ENCODE measurements at regions of chr4 and their contacts with region 1.

Region 1: DNA sequence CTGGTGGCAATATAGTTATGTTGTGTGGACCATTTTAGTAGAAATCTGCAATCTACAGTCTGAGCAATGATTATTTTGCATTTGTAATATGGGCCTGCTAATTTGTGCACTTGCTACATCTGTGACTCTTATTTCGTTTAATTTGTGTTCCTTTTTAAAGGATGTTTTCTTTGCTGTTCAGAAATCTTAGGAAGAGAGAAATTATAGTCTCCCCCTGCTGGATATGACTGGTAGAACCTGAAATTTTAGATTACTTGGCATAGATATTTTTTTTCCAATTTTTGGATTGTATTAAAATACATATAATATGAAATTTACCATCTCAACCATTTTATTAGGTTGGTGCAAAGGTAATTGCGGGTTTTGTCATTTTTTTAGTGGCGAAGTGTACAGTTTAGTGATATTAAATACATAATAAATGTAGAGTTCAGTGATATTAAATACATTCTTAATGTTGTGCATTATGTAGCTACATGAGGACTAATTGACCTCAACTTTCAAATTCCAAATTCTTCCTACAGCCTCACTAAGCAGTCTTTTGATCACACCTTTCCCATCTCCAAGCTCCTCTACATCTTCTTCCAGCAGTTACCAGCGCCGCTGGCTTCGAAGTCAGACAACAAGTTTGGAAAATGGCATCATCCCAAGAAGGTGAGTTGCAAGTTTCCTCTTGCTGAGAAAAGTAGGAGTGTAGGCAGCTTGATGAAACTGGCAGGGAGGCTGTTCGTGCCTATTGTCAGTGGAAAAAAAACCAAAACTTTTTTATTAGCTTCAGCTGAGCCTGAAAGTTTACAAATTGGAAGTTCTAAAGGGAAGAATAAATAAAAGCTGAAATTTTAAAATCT is 82.2 kb downstream of the FNIP2 start:
- DNase-seq: no peak
- H3K4me3 ChIP-seq: no peak overlapping the region
- H3K27ac ChIP-seq: no peak overlapping the region
- H3K4me1 ChIP-seq: peaks cover 0 to 12% (median 8%) of the 10 kb centered on the region in 4 experiments; a peak in 6 of 7 replicates
- H3K27me3 ChIP-seq: no peaks in the 10 kb centered on the region
- CTCF ChIP-seq: peak in 2 of 3 experiments; percentile 33 to 39; a peak in 2 of 4 replicates
- EP300 ChIP-seq: no peak
- POLR2A ChIP-seq: no peak
- RAD21 ChIP-seq: peak; percentile 25 to 41

Region 2: GRCh38 chr4:158704269-158704668 is 146.8 kb before region 1 on chr4:
- CTCF ChIA-PET with region 1: interaction called, 10 read pairs
- POLR2A ChIA-PET with region 1: no interaction called
- DNase-seq: no peak
- H3K4me3 ChIP-seq: no peak overlapping the region
- H3K27ac ChIP-seq: no peak overlapping the region
- H3K4me1 ChIP-seq: no peaks in the 10 kb centered on the region
- H3K27me3 ChIP-seq: no peaks in the 10 kb centered on the region
- CTCF ChIP-seq: no peak
- EP300 ChIP-seq: no peak
- POLR2A ChIP-seq: no peak
- RAD21 ChIP-seq: no peak

Region 3: GRCh38 chr4:158782551-158783360 is 68.3 kb before region 1 on chr4:
- CTCF ChIA-PET with region 1: interaction called, 16 read pairs
- POLR2A ChIA-PET with region 1: interaction called, 5 read pairs
- DNase-seq: no peak
- H3K4me3 ChIP-seq: no peak overlapping the region
- H3K27ac ChIP-seq: no peak overlapping the region
- H3K4me1 ChIP-seq: peaks cover 0 to 1% (median 0%) of the 10 kb centered on the region in 4 experiments; a peak in 2 of 7 replicates
- H3K27me3 ChIP-seq: no peaks in the 10 kb centered on the region
- CTCF ChIP-seq: no peak
- EP300 ChIP-seq: no peak
- POLR2A ChIP-seq: no peak
- RAD21 ChIP-seq: no peak

Region 4: DNA sequence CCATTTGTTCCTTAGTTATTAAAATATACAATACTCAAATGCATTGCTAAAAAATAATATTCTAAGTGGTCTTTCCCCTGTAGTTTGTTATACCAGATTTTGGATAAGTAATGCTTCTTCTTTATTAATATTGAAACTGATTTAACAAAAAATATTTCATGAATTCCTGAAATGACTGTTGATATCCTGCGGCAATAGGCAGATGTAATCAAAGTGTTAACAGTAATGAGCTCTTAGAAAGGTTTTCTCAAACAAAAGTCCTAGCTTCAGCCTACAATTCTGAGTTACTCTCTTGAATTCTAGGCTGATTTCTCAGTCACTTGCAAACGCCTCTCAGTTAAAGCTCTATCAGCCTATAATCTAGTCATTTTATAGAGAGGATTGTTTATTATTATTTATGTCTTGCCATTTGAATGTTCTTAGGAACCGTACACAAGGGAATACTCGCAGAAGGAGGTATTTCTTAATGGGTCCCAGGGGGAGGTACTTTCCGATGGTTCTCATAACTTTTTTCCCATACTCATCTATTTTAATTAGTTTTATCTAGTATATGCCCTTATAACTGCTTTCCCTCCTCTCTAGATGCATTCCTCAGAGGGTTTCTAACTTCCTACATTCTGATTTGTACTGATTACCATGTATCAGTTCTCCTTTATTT is 14.6 kb after region 1 on chr4:
- CTCF ChIA-PET with region 1: interaction called, 29 read pairs
- POLR2A ChIA-PET with region 1: no interaction called
- DNase-seq: no peak
- H3K4me3 ChIP-seq: no peak overlapping the region
- H3K27ac ChIP-seq: no peak overlapping the region
- H3K4me1 ChIP-seq: peaks cover 0 to 6% (median 3%) of the 10 kb centered on the region in 4 experiments; a peak in 4 of 7 replicates
- H3K27me3 ChIP-seq: no peaks in the 10 kb centered on the region
- CTCF ChIP-seq: no peak
- EP300 ChIP-seq: no peak
- POLR2A ChIP-seq: no peak
- RAD21 ChIP-seq: no peak

Region 5: GRCh38 chr4:159191989-159192388 is 341.0 kb after region 1 on chr4:
- CTCF ChIA-PET with region 1: interaction called, 11 read pairs
- POLR2A ChIA-PET with region 1: interaction called, 3 read pairs
- DNase-seq: no peak
- H3K4me3 ChIP-seq: no peak overlapping the region
- H3K27ac ChIP-seq: no peak overlapping the region
- H3K4me1 ChIP-seq: no peaks in the 10 kb centered on the region; a peak in 1 of 7 replicates
- H3K27me3 ChIP-seq: no peaks in the 10 kb centered on the region
- CTCF ChIP-seq: peak in 2 of 3 experiments; percentile 61 to 71; a peak in 3 of 4 replicates
- EP300 ChIP-seq: no peak
- POLR2A ChIP-seq: no peak
- RAD21 ChIP-seq: peak; percentile 53 to 63; a peak in 3 of 4 replicates